HEK293 (cell line): ENCODE measurements at regions of chr9 and their contacts with region 1.

Region 1: DNA sequence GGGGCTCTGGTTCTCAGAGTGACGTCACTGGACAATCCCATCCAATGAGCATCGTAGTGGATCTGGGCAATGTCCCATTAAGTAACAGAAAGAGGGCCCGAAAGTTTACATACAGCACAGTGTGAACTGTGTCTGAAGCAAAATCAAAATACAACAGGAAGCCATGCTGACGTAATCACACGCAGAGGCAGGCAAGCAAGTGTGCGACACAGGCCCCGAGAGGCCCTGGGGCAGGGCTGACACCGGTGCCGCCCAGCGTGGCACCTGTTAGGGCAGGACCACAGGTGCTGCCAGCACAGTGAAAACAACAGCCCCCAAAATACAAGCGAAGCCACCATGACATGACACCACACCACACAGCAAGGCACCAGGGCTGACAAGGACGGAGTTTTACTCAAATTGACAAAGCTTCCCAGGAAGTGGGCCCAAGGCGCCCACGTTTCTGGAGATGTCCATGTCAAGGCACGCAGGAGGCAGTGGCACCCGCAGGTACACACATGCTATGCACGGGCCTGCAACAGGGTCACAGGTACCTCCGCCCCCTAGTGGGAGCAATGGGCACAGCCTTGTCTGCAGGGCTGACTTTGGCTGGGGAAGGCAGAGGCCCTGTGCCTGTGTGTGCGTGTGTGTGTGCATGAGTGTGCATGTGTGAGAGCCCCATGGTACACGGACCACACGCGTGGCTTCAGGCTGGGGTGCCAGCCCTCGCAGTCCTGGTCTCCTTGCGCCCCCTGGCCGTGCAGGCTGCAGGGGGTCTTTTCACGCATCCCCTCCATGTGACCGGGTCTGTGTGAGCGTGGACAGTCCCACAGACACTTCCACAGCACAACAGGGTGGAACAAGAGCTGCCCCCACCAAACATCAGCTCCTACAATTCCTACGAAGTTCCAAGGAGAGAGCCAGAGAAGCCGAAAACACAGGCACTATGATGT is 19.6 kb downstream of the QSOX2 start:
- H3K4me3 ChIP-seq: no peak overlapping the region
- H3K27ac ChIP-seq: no peak overlapping the region
- H3K4me1 ChIP-seq: no peaks in the 10 kb centered on the region
- CTCF ChIP-seq: peak; percentile 96

Region 2: DNA sequence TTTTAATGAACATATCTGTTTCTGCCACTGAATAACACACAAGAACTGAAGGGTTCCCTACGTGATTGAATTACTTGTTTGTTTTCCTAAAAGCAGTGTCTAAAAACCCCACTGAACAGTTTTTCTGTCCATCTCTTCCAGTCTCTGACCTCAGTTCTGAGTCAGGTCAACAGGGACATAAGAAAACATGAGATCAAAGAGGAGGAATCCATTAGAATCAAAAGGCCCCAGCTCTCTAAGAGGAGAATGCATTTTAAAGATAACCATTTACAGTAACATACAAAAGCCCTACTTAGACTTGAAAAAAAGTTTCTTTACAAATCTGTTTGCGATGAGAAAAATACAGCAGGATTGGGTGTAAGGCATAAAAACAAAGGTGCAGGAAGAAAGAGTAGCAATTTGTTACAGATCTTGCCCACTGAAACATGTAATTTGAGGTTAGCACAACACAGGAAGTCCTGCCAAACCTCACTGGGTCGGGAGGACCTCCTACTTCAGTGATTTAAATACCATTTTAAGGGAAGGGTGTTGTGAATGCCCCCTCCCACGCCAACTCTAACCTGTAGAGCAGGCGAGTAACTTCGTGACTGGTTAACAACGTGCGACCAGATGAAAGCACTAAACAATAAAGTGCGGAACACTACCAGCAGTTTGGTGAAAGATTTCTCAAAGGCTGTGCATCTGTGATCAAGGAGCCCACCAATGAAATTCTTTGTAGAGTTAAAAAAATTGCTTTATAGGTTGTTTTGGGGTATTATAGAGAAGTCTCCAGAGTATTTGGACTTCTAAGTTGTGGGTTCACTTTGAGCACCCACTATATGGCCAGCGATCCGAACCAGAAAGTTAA is 18.3 kb after region 1 on chr9:
- CTCF ChIA-PET with region 1: interaction called, 15 read pairs
- POLR2A ChIA-PET with region 1: no interaction called
- H3K4me3 ChIP-seq: peak overlapping the region; percentile 70
- H3K27ac ChIP-seq: no peak overlapping the region
- H3K4me1 ChIP-seq: 0 out of 2 replicates have a peak, but pooled peaks cover 2% of the 10 kb centered on the region
- CTCF ChIP-seq: no peak

Region 3: GRCh38 chr9:136267261-136268111 is 41.5 kb after region 1 on chr9:
- CTCF ChIA-PET with region 1: interaction called, 13 read pairs
- POLR2A ChIA-PET with region 1: no interaction called
- H3K4me3 ChIP-seq: peak overlapping the region; percentile 21
- H3K27ac ChIP-seq: no peak overlapping the region
- H3K4me1 ChIP-seq: no peaks in the 10 kb centered on the region
- CTCF ChIP-seq: peak; percentile 51; the same call in 1 of the 2 replicates